ENCODE measurements at regions of chr7 and their contacts with region 1.

Region 1: DNA sequence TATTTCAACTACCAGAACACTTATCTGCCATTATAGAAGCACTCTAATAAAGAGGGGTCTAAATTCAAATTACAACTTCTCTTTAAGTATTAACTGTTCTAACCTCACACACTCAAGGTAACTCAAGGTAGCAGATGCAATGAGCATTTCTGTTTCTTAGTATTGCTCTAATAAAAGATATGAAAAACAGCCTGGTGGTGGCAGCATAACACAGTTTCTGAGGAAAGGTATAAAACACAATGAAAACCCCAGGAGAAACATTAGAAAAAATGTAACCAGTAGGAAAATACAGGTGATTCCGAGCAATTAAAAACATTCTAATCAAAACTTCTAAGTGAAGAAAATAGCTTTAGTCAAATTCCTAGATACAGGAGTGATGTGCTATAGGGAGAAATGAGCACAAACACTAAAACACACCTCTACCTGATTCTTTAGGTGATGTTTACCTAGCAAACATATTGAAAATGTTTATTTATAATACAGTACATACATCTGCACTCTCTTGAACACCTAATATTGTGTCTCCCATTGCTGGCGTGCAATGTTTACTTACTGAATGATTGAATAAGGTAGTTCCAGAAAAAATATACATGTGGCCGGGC is 3.5 kb downstream of the MKRN1 start:
- DNase-seq: no peak
- ATAC-seq: no peak
- H3K4me3 Mint-ChIP-seq: peak overlapping the region; percentile 27
- H3K27ac Mint-ChIP-seq: peak overlapping the region; percentile 86
- H3K4me1 Mint-ChIP-seq: peaks cover 39% of the 10 kb centered on the region
- H3K27me3 Mint-ChIP-seq: no peaks in the 10 kb centered on the region
- CTCF ChIP-seq: no peak

Region 2: GRCh38 chr7:140623980-140624379 is 148.1 kb after region 1 on chr7:
- CTCF ChIA-PET with region 1: no interaction called
- POLR2A ChIA-PET with region 1: no interaction called
- DNase-seq: no peak
- ATAC-seq: no peak; the same call in 1 of the 2 replicates
- H3K4me3 Mint-ChIP-seq: no peak overlapping the region
- H3K27ac Mint-ChIP-seq: peak overlapping the region; percentile 87
- H3K4me1 Mint-ChIP-seq: peaks cover 27% of the 10 kb centered on the region
- H3K27me3 Mint-ChIP-seq: no peaks in the 10 kb centered on the region
- CTCF ChIP-seq: no peak

Region 3: GRCh38 chr7:140653319-140654108 is 177.7 kb after region 1 on chr7:
- CTCF ChIA-PET with region 1: interaction called, 11 read pairs
- POLR2A ChIA-PET with region 1: interaction called, 3 read pairs
- DNase-seq: peak; percentile 66
- ATAC-seq: peak; percentile 90
- H3K4me3 Mint-ChIP-seq: no peak overlapping the region
- H3K27ac Mint-ChIP-seq: no peak overlapping the region
- H3K4me1 Mint-ChIP-seq: peaks cover 11% of the 10 kb centered on the region; the same call in 1 of the 2 replicates
- H3K27me3 Mint-ChIP-seq: no peaks in the 10 kb centered on the region
- CTCF ChIP-seq: peak; percentile 74

Measured in WTC11 (cell line).